ENCODE measurements at regions of chr4 and their contacts with region 1.

Region 1: GRCh38 chr4:121900132-121900983 is 30.1 kb upstream of the BBS7 start:
- DNase-seq: peak; percentile 10 to 56
- H3K4me3 ChIP-seq: no peak overlapping the region
- H3K27ac ChIP-seq: no peak overlapping the region
- H3K4me1 ChIP-seq: no peaks in the 10 kb centered on the region
- H3K27me3 ChIP-seq: no peaks in the 10 kb centered on the region
- CTCF ChIP-seq: peak in 2 of 3 experiments; percentile 79 to 82; a peak in 3 of 4 replicates
- EP300 ChIP-seq: no peak
- POLR2A ChIP-seq: no peak
- RAD21 ChIP-seq: peak; percentile 95 to 96

Region 2: GRCh38 chr4:121690001-121690400 is 210.4 kb before region 1 on chr4:
- CTCF ChIA-PET with region 1: no interaction called
- POLR2A ChIA-PET with region 1: no interaction called
- DNase-seq: no peak
- H3K4me3 ChIP-seq: no peak overlapping the region
- H3K27ac ChIP-seq: no peak overlapping the region
- H3K4me1 ChIP-seq: peaks cover 0 to 5% (median 4%) of the 10 kb centered on the region in 4 experiments; a peak in 2 of 7 replicates
- H3K27me3 ChIP-seq: no peaks in the 10 kb centered on the region
- CTCF ChIP-seq: no peak
- EP300 ChIP-seq: no peak
- POLR2A ChIP-seq: no peak
- RAD21 ChIP-seq: no peak

Region 3: GRCh38 chr4:121814756-121815155 is 85.6 kb before region 1 on chr4:
- CTCF ChIA-PET with region 1: no interaction called
- POLR2A ChIA-PET with region 1: no interaction called
- DNase-seq: no peak
- H3K4me3 ChIP-seq: no peak overlapping the region
- H3K27ac ChIP-seq: no peak overlapping the region
- H3K4me1 ChIP-seq: no peaks in the 10 kb centered on the region
- H3K27me3 ChIP-seq: no peaks in the 10 kb centered on the region
- CTCF ChIP-seq: no peak
- EP300 ChIP-seq: no peak
- POLR2A ChIP-seq: no peak
- RAD21 ChIP-seq: no peak

Region 4: DNA sequence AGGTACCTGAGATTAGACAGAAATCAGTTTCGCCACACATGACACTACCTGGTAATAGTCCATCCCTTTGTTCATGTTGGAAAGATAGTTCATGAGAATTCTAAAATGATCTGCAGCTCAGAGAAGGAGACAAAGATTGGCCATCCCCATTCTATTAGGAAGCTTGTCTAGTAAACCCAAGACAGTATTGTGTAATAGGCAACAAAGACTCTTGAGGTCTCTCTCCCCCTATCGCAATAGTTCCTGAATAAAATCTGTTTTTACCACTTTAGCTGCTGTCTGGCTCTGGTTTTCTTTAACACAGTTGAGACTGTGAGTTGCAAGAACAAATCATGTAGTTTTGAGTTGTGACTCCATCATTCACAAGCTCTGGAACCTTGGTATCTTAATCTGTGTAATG is 15.2 kb before region 1 on chr4:
- CTCF ChIA-PET with region 1: interaction called, 13 read pairs
- POLR2A ChIA-PET with region 1: no interaction called
- DNase-seq: no peak
- H3K4me3 ChIP-seq: no peak overlapping the region
- H3K27ac ChIP-seq: no peak overlapping the region
- H3K4me1 ChIP-seq: no peaks in the 10 kb centered on the region
- H3K27me3 ChIP-seq: no peaks in the 10 kb centered on the region
- CTCF ChIP-seq: no peak
- EP300 ChIP-seq: no peak
- POLR2A ChIP-seq: no peak
- RAD21 ChIP-seq: no peak

Region 5: GRCh38 chr4:121950212-121950679 is 49.9 kb after region 1 on chr4:
- CTCF ChIA-PET with region 1: interaction called, 11 read pairs
- POLR2A ChIA-PET with region 1: no interaction called
- DNase-seq: peak; percentile 70 to 99
- H3K4me3 ChIP-seq: peak overlapping the region; percentile 46 to 77 (median 69)
- H3K27ac ChIP-seq: no peak overlapping the region
- H3K4me1 ChIP-seq: peaks cover 0 to 2% (median 0%) of the 10 kb centered on the region in 4 experiments; a peak in 1 of 7 replicates
- H3K27me3 ChIP-seq: peaks cover 23 to 58% (median 42%) of the 10 kb centered on the region in 4 experiments
- CTCF ChIP-seq: peak; percentile 77 to 87 (median 81)
- EP300 ChIP-seq: peak in 1 of 2 experiments; percentile 40; a peak in 1 of 3 replicates
- POLR2A ChIP-seq: peak in 1 of 2 experiments; percentile 31; a peak in 1 of 3 replicates
- RAD21 ChIP-seq: peak; percentile 81 to 82

Region 6: GRCh38 chr4:122003335-122003734 is 103.0 kb after region 1 on chr4:
- CTCF ChIA-PET with region 1: interaction called, 19 read pairs
- POLR2A ChIA-PET with region 1: no interaction called
- DNase-seq: peak; percentile 33 to 67
- H3K4me3 ChIP-seq: no peak overlapping the region
- H3K27ac ChIP-seq: no peak overlapping the region
- H3K4me1 ChIP-seq: no peaks in the 10 kb centered on the region
- H3K27me3 ChIP-seq: no peaks in the 10 kb centered on the region
- CTCF ChIP-seq: peak; percentile 23 to 74 (median 59)
- EP300 ChIP-seq: no peak
- POLR2A ChIP-seq: no peak
- RAD21 ChIP-seq: peak; percentile 64 to 70

Region 7: GRCh38 chr4:122117743-122118142 is 217.4 kb after region 1 on chr4:
- CTCF ChIA-PET with region 1: no interaction called
- POLR2A ChIA-PET with region 1: no interaction called
- DNase-seq: no peak
- H3K4me3 ChIP-seq: no peak overlapping the region
- H3K27ac ChIP-seq: no peak overlapping the region
- H3K4me1 ChIP-seq: no peaks in the 10 kb centered on the region
- H3K27me3 ChIP-seq: no peaks in the 10 kb centered on the region
- CTCF ChIP-seq: no peak
- EP300 ChIP-seq: no peak
- POLR2A ChIP-seq: no peak
- RAD21 ChIP-seq: no peak

Measured in H1 (cell line).